WTC11 (cell line): ENCODE measurements at regions of chr15 and their contacts with region 1.

Region 1: DNA sequence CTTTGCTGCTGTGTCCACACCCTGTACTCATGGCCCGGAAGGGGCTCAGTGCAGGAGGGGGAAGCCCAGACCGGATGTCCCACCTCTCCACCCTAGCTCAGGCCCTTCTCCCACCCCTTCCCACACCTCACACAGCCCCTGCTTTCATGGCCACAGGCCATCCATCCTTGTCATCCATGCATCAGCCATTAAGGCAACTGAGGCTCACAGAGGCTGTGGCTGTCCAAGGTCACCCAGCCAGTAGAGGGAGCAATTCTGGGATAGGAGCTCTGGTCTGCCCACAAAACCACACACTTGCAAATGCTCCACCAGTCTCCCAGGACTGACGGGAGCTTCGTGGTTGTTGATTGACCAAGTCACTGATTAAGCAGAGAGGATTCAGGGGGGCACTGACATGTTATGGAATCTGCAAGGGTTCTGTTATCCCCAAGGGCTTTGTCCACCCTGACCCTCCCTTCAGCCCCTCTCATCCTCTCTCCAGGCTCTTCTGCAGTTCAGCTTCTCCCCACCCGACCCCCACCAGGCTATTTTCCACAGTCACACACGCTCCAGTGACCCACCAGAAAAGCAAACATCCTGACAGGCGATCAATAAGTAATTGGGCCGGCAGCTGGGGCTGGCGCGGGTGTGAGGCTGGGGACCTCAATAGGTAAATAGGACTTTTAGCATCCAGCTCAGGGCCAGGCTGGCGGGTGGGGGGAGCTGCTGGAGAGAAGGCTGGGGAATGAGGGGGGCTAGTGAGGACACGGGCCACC is 15.1 kb downstream of the LINGO1 start:
- DNase-seq: peak; percentile 56
- ATAC-seq: peak; percentile 49
- H3K4me3 Mint-ChIP-seq: no peak overlapping the region
- H3K27ac Mint-ChIP-seq: no peak overlapping the region; the same call in 1 of the 2 replicates
- H3K4me1 Mint-ChIP-seq: peaks cover 41% of the 10 kb centered on the region
- H3K27me3 Mint-ChIP-seq: no peaks in the 10 kb centered on the region; the same call in 1 of the 2 replicates
- CTCF ChIP-seq: peak; percentile 19; the same call in 1 of the 2 replicates

Region 2: GRCh38 chr15:77575203-77575934 is 42.3 kb before region 1 on chr15:
- CTCF ChIA-PET with region 1: interaction called, 14 read pairs
- POLR2A ChIA-PET with region 1: no interaction called
- DNase-seq: no peak
- ATAC-seq: no peak
- H3K4me3 Mint-ChIP-seq: no peak overlapping the region
- H3K27ac Mint-ChIP-seq: no peak overlapping the region
- H3K4me1 Mint-ChIP-seq: 0 out of 2 replicates have a peak, but pooled peaks cover 2% of the 10 kb centered on the region
- H3K27me3 Mint-ChIP-seq: no peaks in the 10 kb centered on the region
- CTCF ChIP-seq: no peak

Region 3: GRCh38 chr15:77589839-77590238 is 27.8 kb before region 1 on chr15:
- CTCF ChIA-PET with region 1: interaction called, 14 read pairs
- POLR2A ChIA-PET with region 1: no interaction called
- DNase-seq: no peak
- ATAC-seq: no peak
- H3K4me3 Mint-ChIP-seq: no peak overlapping the region
- H3K27ac Mint-ChIP-seq: peak overlapping the region; percentile 70; the same call in 1 of the 2 replicates
- H3K4me1 Mint-ChIP-seq: 0 out of 2 replicates have a peak, but pooled peaks cover 3% of the 10 kb centered on the region
- H3K27me3 Mint-ChIP-seq: no peaks in the 10 kb centered on the region; the same call in none of the 2 replicates
- CTCF ChIP-seq: no peak

Region 4: DNA sequence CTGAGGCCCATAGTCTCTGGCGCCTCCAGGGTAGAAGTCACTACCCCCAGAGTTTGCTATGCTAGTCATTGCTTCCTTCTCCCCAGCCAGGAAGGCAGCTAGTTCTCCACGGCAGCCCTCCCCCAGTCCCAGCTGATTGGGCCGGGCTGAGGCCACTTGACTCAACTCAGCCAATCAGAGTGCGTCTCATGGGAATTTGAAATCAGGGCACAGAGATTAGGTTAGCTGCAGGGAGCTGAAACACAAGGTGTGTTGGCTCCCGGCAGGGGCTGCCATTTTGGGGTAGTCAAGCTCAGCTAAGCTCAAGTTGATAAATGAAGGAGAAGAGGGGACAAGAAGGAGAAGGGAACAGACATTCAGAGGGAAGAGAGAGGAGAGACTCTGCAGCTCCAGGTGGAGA is 17.8 kb before region 1 on chr15:
- CTCF ChIA-PET with region 1: interaction called, 96 read pairs
- POLR2A ChIA-PET with region 1: interaction called, 3 read pairs
- DNase-seq: peak; percentile 53
- ATAC-seq: peak; percentile 53
- H3K4me3 Mint-ChIP-seq: no peak overlapping the region
- H3K27ac Mint-ChIP-seq: peak overlapping the region; percentile 95
- H3K4me1 Mint-ChIP-seq: peaks cover 37% of the 10 kb centered on the region
- H3K27me3 Mint-ChIP-seq: no peaks in the 10 kb centered on the region; the same call in 1 of the 2 replicates
- CTCF ChIP-seq: no peak

Region 5: DNA sequence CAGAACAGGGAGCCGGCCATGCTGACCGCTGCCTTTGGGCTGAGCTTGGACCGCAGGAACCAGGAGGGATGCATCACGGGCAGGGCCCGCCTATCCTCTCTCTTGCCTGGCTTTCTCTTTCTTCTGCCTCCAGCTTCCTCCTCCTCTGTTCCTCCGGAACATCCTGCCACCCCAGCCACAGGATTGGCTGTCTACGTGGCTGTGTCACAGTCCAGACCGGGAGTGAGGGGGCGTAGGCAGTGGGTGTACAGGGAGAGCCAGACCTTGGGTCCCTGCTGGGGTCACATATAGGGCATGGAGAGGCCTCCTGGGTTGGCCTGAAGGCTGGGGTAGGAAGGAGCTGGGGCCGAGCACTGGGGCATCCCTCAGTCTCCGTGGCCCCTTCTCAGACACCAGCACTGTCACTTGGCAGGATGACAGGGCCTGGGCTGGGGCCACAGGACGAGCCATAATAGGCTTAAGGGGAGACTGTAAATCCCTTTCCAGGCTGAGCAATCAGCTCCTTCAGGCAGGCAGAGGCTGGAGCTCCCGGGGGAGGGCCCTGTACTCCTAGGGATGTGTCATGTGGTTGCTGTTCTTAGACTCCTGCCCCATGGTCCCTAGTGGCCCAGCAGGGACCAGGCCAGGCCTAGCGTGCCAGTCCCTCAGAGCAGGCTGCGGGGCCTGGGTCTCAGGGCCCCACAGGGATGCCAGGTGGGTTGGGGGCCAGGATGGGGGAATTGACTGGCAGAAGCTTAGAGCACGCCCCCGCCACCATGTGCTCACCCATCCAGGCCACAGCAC is 10.4 kb before region 1 on chr15:
- CTCF ChIA-PET with region 1: interaction called, 96 read pairs
- POLR2A ChIA-PET with region 1: interaction called, 4 read pairs
- DNase-seq: no peak
- ATAC-seq: no peak
- H3K4me3 Mint-ChIP-seq: no peak overlapping the region
- H3K27ac Mint-ChIP-seq: no peak overlapping the region
- H3K4me1 Mint-ChIP-seq: peaks cover 52% of the 10 kb centered on the region
- H3K27me3 Mint-ChIP-seq: no peaks in the 10 kb centered on the region; the same call in 1 of the 2 replicates
- CTCF ChIP-seq: no peak